ENCODE measurements at regions of chr3 and their contacts with region 1.

Region 1: GRCh38 chr3:106609666-106610301 is 741.0 kb upstream of the CBLB start:
- DNase-seq: peak; percentile 18 to 82 (median 47)
- ATAC-seq: peak; percentile 77
- H3K4me3 ChIP-seq: no peak overlapping the region
- H3K4me3 Mint-ChIP-seq: no peak overlapping the region
- H3K27ac ChIP-seq: no peak overlapping the region
- H3K27ac Mint-ChIP-seq: no peak overlapping the region
- H3K4me1 ChIP-seq: no peaks in the 10 kb centered on the region
- H3K4me1 Mint-ChIP-seq: no peaks in the 10 kb centered on the region
- H3K27me3 ChIP-seq: no peaks in the 10 kb centered on the region
- H3K27me3 Mint-ChIP-seq: no peaks in the 10 kb centered on the region
- CTCF ChIP-seq: peak; percentile 91

Region 2: GRCh38 chr3:105513042-105513441 is 1096.7 kb before region 1 on chr3:
- CTCF ChIA-PET with region 1: interaction called, 6 read pairs
- POLR2A ChIA-PET with region 1: no interaction called
- intact Hi-C with region 1: loop called in 1 of 2 experiments (anchors 5 kb)
- DNase-seq: no peak
- ATAC-seq: no peak
- H3K4me3 ChIP-seq: no peak overlapping the region
- H3K4me3 Mint-ChIP-seq: no peak overlapping the region
- H3K27ac ChIP-seq: no peak overlapping the region
- H3K27ac Mint-ChIP-seq: no peak overlapping the region
- H3K4me1 ChIP-seq: no peaks in the 10 kb centered on the region
- H3K4me1 Mint-ChIP-seq: no peaks in the 10 kb centered on the region
- H3K27me3 ChIP-seq: no peaks in the 10 kb centered on the region
- H3K27me3 Mint-ChIP-seq: no peaks in the 10 kb centered on the region
- CTCF ChIP-seq: no peak

Region 3: GRCh38 chr3:107676469-107677309 is 1066.9 kb after region 1 on chr3:
- CTCF ChIA-PET with region 1: no interaction called
- POLR2A ChIA-PET with region 1: no interaction called
- intact Hi-C with region 1: no loop called
- DNase-seq: peak in 3 of 14 experiments; percentile 38 to 49 (median 39)
- ATAC-seq: peak; percentile 51
- H3K4me3 ChIP-seq: no peak overlapping the region
- H3K4me3 Mint-ChIP-seq: no peak overlapping the region
- H3K27ac ChIP-seq: no peak overlapping the region
- H3K27ac Mint-ChIP-seq: peak overlapping the region; percentile 8
- H3K4me1 ChIP-seq: no peaks in the 10 kb centered on the region
- H3K4me1 Mint-ChIP-seq: peaks cover 47% of the 10 kb centered on the region
- H3K27me3 ChIP-seq: no peaks in the 10 kb centered on the region
- H3K27me3 Mint-ChIP-seq: no peaks in the 10 kb centered on the region
- CTCF ChIP-seq: peak; percentile 77

Measured in CD4-positive, alpha-beta T cell (primary cell).